ENCODE measurements at regions of chr7 and their contacts with region 1.

Region 1: DNA sequence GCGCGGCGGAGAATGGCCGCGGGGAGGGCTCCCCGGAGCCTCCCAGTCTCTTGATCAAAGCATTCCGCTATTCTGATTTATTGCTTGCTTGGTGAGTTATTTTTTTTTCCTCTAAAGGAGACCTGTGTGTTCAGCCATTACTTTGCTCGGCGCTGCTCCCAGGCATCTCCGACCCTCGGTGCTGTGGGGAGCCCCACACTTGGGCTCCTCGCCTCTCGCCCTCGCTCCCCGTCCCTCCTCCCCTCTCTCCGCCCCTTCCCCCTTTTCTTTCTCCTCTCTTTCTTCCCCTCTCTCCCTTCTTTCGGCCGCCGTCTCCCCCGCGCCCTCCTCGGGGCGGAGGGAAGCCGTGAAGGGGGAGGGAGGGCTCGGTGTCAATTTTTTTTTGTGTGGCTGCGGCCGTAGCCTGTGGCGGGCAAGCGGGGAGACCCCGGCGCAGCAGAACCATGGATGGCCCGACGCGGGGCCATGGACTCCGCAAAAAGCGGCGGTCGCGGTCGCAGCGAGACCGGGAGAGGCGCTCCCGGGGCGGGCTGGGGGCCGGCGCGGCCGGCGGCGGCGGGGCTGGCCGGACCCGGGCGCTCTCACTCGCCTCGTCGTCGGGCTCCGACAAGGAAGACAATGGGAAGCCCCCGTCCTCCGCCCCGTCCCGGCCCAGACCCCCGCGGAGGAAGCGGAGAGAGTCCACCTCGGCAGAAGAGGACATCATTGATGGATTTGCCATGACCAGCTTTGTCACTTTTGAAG is 1.1 kb downstream of the AUTS2 start:
- DNase-seq: no peak
- ATAC-seq: peak; percentile 1; the same call in 1 of the 3 replicates
- H3K4me3 ChIP-seq: peak overlapping the region; percentile 97
- H3K27ac ChIP-seq: peak overlapping the region; percentile 29; the same call in 1 of the 2 replicates
- H3K4me1 ChIP-seq: peaks cover 18% of the 10 kb centered on the region
- H3K27me3 ChIP-seq: no peaks in the 10 kb centered on the region; a peak in 1 of 4 replicates
- CTCF ChIP-seq: no peak
- EP300 ChIP-seq: no peak
- POLR2A ChIP-seq: no peak; the same call in 1 of the 2 replicates
- RAD21 ChIP-seq: no peak

Region 2: DNA sequence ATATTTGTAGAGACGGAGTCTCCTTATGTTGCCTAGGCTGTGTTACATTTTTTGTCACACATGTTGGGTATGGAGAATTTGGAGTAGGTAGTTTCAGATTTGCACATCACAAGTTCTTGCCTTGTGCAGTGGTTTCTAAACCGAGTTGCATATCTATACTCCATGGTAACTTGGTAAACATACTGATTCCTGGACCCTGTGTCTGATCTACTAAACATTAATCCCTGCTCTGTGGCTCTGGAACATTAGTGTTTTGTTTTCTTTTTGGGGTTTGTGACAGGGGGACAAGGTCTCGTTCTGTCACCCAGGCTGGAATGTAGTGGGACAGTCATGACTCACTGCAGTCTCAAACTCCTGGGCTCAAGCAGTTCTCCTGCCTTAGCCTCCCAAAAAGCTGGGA is 23.6 kb after region 1 on chr7:
- CTCF ChIA-PET with region 1: interaction called, 3 read pairs
- POLR2A ChIA-PET with region 1: interaction called, 5 read pairs
- RAD21 ChIA-PET with region 1: interaction called, 22 read pairs
- SMC1A ChIA-PET with region 1: interaction called, 32 read pairs
- in situ Hi-C with region 1: no loop called
- intact Hi-C with region 1: no loop called
- DNase-seq: no peak
- ATAC-seq: peak; percentile 80
- H3K4me3 ChIP-seq: no peak overlapping the region
- H3K27ac ChIP-seq: no peak overlapping the region
- H3K4me1 ChIP-seq: 0 out of 2 replicates have a peak, but pooled peaks cover 7% of the 10 kb centered on the region
- H3K27me3 ChIP-seq: no peaks in the 10 kb centered on the region
- CTCF ChIP-seq: no peak
- EP300 ChIP-seq: no peak
- POLR2A ChIP-seq: no peak
- RAD21 ChIP-seq: no peak

Region 3: DNA sequence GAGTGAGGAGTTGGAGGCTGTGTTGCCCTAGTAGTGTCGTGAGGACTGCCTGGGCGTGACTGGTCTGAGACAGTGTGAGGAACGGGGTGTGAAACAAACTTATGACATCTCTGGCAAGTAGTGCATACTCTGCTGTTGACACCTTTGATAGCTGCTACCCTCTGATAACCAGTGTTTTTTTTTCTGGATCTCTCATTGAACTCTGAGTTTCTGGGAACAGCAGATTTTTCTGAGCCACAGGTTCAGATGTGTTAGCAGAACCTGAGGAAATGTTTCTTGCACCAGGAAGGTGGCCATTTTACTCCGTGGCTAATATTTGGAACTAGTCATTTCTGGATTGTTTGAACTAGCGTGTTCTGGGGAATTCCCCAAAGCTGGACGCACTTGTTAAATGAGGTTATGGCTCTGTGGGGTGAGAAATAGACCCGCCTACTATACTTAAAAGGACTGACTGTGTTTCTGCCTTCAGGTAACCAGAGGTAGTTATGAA is 51.8 kb after region 1 on chr7:
- CTCF ChIA-PET with region 1: interaction called, 3 read pairs
- POLR2A ChIA-PET with region 1: interaction called, 5 read pairs
- RAD21 ChIA-PET with region 1: interaction called, 42 read pairs
- SMC1A ChIA-PET with region 1: interaction called, 11 read pairs
- in situ Hi-C with region 1: no loop called
- intact Hi-C with region 1: loop called (anchors 5 kb)
- DNase-seq: peak; percentile 75
- ATAC-seq: peak; percentile 79
- H3K4me3 ChIP-seq: no peak overlapping the region
- H3K27ac ChIP-seq: peak overlapping the region; percentile 20
- H3K4me1 ChIP-seq: peaks cover 35% of the 10 kb centered on the region
- H3K27me3 ChIP-seq: no peaks in the 10 kb centered on the region
- CTCF ChIP-seq: no peak
- EP300 ChIP-seq: peak in 1 of 2 experiments; percentile 44; a peak in 2 of 4 replicates
- POLR2A ChIP-seq: no peak
- RAD21 ChIP-seq: no peak

Region 4: DNA sequence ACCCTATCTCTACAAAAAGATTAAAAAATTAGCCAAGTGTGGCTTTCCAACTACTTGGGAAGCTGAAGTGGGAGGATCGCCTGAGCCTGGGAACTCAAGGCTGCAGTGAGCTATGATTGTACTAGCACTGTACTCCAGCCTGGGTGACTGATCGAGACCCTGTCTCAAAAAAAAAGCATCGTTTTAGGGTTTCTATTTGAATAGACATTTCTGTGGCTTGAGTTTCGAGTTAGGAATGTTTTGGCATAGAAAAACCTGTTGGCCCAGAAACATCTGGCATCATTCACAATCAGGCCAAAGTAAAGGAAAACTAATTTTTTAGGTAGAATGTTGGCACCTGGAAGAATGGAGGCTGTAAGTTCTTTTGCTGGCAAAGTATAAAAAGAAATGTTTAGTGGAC is 71.3 kb after region 1 on chr7:
- CTCF ChIA-PET with region 1: interaction called, 4 read pairs
- POLR2A ChIA-PET with region 1: interaction called, 4 read pairs
- RAD21 ChIA-PET with region 1: interaction called, 9 read pairs
- SMC1A ChIA-PET with region 1: interaction called, 88 read pairs
- in situ Hi-C with region 1: no loop called
- intact Hi-C with region 1: loop called (anchors 5 kb)
- DNase-seq: no peak
- ATAC-seq: peak; percentile 13; the same call in 1 of the 3 replicates
- H3K4me3 ChIP-seq: no peak overlapping the region
- H3K27ac ChIP-seq: no peak overlapping the region
- H3K4me1 ChIP-seq: peaks cover 27% of the 10 kb centered on the region
- H3K27me3 ChIP-seq: no peaks in the 10 kb centered on the region
- CTCF ChIP-seq: no peak
- EP300 ChIP-seq: no peak
- POLR2A ChIP-seq: no peak
- RAD21 ChIP-seq: no peak

Region 5: DNA sequence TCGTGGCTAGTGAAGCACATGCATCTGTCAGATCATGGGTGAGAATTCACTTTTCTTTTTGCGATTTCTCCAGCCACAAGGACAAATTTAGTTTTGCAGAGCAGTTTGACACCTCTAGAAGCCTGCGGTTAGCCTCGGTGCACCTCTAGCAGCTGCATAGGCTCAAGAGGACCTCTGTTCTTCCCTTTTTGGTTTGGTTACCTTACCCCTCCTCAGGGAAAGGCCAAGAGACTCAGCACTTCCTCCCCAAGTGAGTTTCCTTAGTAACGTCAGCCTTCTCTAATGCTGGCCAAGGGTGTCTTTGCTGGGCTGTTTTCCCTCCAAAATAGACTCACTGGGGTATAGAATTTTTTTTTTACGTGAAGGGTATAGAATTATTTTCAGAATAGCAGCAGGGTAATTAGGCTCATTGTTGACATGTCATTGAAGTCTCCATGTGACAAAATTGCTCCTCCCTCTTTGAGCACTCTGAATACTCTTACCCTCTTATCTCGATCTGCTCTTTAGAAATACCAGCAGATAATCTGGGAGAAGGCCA is 96.7 kb after region 1 on chr7:
- CTCF ChIA-PET with region 1: interaction called, 3 read pairs
- POLR2A ChIA-PET with region 1: no interaction called
- RAD21 ChIA-PET with region 1: interaction called, 8 read pairs
- SMC1A ChIA-PET with region 1: interaction called, 14 read pairs
- in situ Hi-C with region 1: no loop called
- intact Hi-C with region 1: loop called (anchors 2 kb)
- DNase-seq: peak; percentile 88
- ATAC-seq: peak; percentile 82
- H3K4me3 ChIP-seq: no peak overlapping the region; the same call in 1 of the 2 replicates
- H3K27ac ChIP-seq: peak overlapping the region; percentile 41
- H3K4me1 ChIP-seq: peaks cover 59% of the 10 kb centered on the region
- H3K27me3 ChIP-seq: no peaks in the 10 kb centered on the region
- CTCF ChIP-seq: no peak
- EP300 ChIP-seq: peak; percentile 91 to 97
- POLR2A ChIP-seq: no peak
- RAD21 ChIP-seq: peak; percentile 7; the same call in 1 of the 2 replicates

Region 6: DNA sequence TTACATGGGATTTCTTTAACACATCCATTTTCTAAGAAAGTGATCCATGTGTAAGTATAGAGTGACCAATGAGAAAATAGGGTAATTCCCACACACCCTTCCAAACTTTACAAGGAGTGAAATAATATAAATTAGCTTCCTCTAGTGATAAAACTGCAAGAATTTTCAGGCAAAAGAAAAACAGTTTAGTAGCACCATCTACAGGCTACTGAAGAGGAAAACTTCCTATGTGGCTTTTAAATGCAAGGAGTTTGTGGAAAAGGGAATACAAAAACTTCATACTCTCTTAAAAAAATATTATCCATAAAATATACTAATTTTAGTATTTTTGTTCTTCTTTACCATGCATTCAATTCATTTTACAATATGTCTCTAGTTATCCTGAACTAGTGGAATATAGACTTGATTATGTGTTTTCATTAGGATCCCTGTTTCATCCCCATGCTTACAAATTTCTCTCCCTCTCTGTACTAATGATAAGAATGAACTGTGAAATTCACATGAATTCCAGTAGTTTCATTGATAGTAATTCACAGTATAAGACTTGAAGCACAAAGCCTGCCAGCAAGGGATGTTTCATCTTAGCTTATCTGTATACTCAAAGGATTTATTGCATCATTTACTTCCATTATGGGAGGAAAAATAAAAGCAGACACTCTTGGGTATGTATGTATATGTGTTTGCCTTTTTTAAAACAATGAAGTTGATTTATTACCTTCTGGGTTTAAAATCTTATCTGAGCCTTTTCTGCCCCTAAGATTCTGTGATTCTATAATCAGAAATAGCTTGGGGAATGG is 441.8 kb after region 1 on chr7:
- CTCF ChIA-PET with region 1: no interaction called
- POLR2A ChIA-PET with region 1: no interaction called
- RAD21 ChIA-PET with region 1: no interaction called
- SMC1A ChIA-PET with region 1: interaction called, 3 read pairs
- in situ Hi-C with region 1: no loop called
- intact Hi-C with region 1: loop called (anchors 10 kb)
- DNase-seq: no peak
- ATAC-seq: no peak
- H3K4me3 ChIP-seq: no peak overlapping the region
- H3K27ac ChIP-seq: no peak overlapping the region
- H3K4me1 ChIP-seq: no peaks in the 10 kb centered on the region
- H3K27me3 ChIP-seq: no peaks in the 10 kb centered on the region
- CTCF ChIP-seq: peak; percentile 26 to 52 (median 27); a peak in 4 of 6 replicates
- EP300 ChIP-seq: no peak
- POLR2A ChIP-seq: no peak
- RAD21 ChIP-seq: peak; percentile 65

Measured in GM12878 (cell line).